AG04449 (cell line): ENCODE measurements at regions of chr18 and their contacts with region 1.

Region 1: GRCh38 chr18:59085797-59086196 is 53.9 kb upstream of the SEC11C start:
- DNase-seq: peak; percentile 17
- H3K4me3 ChIP-seq: no peak overlapping the region
- CTCF ChIP-seq: no peak

Region 2: DNA sequence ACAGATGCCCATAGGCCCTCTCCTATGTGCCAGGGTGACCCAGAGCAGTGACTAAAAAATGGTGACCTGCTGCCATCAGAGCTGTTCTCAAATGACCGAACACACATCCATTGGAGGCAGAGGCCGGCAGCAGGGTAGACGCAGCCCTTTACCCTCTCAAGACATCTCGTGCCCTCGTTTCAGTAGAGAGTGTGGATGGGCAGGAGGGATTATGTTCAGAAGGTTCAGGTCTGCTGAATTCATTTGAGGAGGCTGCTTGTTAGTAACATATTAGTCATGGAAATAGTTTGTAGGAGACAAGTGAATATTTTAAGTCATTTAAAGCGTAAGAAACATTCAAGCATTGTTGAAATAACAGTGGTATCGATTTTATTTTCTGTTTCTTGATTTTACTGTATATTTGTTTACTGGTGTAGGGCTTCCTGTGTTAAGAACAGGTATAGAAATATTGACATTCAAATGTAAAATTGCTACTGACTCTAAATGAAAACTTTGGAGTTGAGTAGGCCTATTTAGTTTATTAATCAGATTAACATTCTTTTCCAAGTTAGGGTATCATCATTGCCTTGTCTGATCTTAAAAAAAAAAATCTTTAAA is 138.6 kb before region 1 on chr18:
- CTCF ChIA-PET with region 1: no interaction called
- POLR2A ChIA-PET with region 1: no interaction called
- DNase-seq: no peak
- H3K4me3 ChIP-seq: no peak overlapping the region
- CTCF ChIP-seq: no peak

Region 3: DNA sequence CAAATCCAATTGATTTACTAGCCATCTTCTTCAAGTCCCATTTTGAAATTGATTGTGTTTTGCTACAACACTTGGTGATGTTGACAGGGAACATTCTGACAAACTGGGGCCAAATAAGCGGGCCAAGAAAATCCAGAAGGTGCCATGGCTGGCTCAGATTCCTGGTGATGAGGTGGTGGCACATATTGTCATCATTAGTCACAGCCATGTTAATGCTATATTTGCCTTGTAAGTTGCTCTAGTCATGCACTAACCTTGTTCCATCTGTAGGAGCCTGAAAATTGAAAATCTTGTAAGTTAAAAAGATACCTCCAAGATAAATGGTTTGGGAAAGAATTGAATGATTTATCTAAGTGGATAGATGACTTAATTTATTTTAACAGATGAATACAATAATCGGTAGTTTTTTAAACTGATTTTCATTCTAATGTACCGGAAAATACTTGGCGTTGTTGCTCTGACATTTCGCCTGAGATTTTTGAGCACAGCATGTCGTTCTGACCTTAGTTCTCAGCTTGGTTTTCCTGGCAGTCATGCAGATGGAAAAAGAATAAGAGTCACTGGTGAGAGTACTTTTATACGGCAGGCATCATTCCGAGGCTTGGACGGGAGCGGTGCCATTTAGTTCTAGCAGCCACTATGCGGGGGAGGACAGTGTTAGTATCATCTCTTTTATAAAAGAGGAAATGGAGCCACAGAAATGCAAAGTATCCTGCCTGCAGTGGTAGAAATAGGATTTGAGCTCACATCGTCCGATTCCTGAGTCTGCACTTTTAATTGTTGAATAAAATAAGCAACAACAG is 87.2 kb before region 1 on chr18:
- CTCF ChIA-PET with region 1: no interaction called
- POLR2A ChIA-PET with region 1: no interaction called
- DNase-seq: no peak
- H3K4me3 ChIP-seq: no peak overlapping the region
- CTCF ChIP-seq: no peak

Region 4: GRCh38 chr18:59070181-59070912 is 15.4 kb before region 1 on chr18:
- CTCF ChIA-PET with region 1: interaction called, 136 read pairs
- POLR2A ChIA-PET with region 1: no interaction called
- DNase-seq: no peak
- H3K4me3 ChIP-seq: no peak overlapping the region
- CTCF ChIP-seq: peak; percentile 90

Region 5: GRCh38 chr18:59096098-59096789 is 10.4 kb after region 1 on chr18:
- CTCF ChIA-PET with region 1: interaction called, 12 read pairs
- POLR2A ChIA-PET with region 1: no interaction called
- DNase-seq: no peak
- H3K4me3 ChIP-seq: no peak overlapping the region
- CTCF ChIP-seq: no peak

Region 6: GRCh38 chr18:59109375-59109774 is 23.6 kb after region 1 on chr18:
- CTCF ChIA-PET with region 1: interaction called, 34 read pairs
- POLR2A ChIA-PET with region 1: no interaction called
- DNase-seq: no peak
- H3K4me3 ChIP-seq: no peak overlapping the region
- CTCF ChIP-seq: no peak

Region 7: DNA sequence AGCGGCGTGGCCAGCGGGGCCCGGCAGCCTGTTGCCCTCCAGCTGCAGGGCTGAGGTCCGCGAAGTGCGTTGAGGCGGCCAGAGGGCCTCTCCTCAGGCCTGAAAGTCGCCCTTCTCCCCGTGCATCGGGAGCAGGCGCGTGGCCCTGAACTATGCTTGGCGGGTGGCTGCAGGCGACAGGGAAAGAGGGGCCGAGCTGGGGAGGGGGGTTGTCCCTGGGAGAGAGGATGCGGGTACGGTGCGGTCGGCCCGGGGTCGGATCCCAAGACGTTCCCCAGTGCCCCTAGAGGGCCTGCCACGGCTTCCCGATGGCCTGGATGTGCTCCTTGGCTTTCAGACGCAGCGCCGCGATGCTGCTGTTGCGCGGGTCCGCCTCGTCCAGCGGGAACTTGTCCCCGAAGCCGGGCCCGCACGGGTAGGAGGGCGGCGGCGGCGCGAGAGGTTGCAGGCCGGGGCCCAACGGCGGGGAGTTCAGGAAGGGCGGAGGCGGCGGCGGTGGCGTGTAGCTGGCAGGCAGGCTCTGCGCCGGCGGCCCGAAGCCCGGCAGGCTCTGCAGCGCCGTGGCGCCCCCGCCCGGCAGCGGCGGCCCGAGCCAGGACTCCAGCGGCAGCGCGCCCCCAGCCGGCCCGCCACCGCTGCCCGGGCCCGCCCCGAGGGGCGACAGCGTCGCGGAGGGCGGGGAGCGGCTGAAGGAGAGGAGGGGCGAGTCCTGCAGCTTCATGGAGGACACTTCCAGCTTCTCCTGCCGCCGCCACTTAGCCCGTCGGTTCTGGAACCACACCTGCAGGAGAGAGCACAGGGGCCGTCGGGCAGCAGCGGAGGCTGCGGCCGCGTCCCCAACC is 183.1 kb after region 1 on chr18:
- CTCF ChIA-PET with region 1: interaction called, 24 read pairs
- POLR2A ChIA-PET with region 1: no interaction called
- DNase-seq: no peak
- H3K4me3 ChIP-seq: no peak overlapping the region
- CTCF ChIP-seq: no peak